CD4-positive, alpha-beta T cell (primary cell): ENCODE measurements at regions of chr6 and their contacts with region 1.

Region 1: GRCh38 chr6:14129575-14129974 is 12.0 kb downstream of the CD83 start:
- DNase-seq: peak in 8 of 14 experiments; percentile 14 to 63 (median 30)
- ATAC-seq: peak; percentile 67
- H3K4me3 ChIP-seq: no peak overlapping the region
- H3K4me3 Mint-ChIP-seq: no peak overlapping the region
- H3K27ac ChIP-seq: no peak overlapping the region
- H3K27ac Mint-ChIP-seq: no peak overlapping the region
- H3K4me1 ChIP-seq: peaks cover 11% of the 10 kb centered on the region
- H3K4me1 Mint-ChIP-seq: peaks cover 7% of the 10 kb centered on the region
- H3K27me3 ChIP-seq: no peaks in the 10 kb centered on the region
- H3K27me3 Mint-ChIP-seq: no peaks in the 10 kb centered on the region
- CTCF ChIP-seq: peak; percentile 23

Region 2: DNA sequence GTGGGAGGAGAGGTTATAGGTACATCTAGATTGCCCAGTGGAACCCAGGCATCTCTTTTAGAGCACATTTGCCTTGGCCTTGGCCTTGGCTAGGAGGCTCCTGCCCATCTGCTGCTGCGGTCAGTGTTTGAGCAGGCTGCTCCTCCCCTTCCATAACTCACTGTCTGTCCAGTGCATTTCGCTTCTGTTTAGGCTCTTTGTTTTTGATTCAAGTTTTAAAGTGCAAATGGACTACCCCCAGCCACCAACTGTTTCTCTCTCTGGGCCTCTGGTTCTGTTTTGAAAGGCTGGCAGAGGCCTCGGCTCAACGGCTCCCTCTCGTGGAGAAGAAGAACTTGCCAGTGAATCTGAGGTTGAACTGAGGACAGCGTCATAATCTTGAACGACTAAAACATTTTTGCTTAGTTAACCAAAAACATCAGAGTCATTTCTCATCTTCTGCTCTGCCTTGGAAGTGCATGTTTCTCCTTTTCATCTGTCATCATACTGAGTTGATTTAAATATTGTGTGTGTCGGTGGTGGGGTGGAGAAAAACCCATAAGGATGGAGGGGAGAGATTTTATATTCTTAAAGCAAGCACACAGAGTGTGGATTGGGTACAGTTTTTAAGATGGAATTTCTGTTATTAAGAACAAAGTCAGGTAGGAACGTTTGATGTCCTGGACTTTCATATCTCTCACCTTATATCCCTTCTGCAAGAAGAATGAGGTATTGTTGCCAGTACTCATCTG is 1361.8 kb after region 1 on chr6:
- CTCF ChIA-PET with region 1: no interaction called
- POLR2A ChIA-PET with region 1: no interaction called
- intact Hi-C with region 1: loop called (anchors 2 kb)
- DNase-seq: peak; percentile 52 to 80 (median 62)
- ATAC-seq: peak; percentile 84
- H3K4me3 ChIP-seq: no peak overlapping the region
- H3K4me3 Mint-ChIP-seq: no peak overlapping the region
- H3K27ac ChIP-seq: no peak overlapping the region
- H3K27ac Mint-ChIP-seq: peak overlapping the region; percentile 28
- H3K4me1 ChIP-seq: peaks cover 7% of the 10 kb centered on the region
- H3K4me1 Mint-ChIP-seq: peaks cover 47% of the 10 kb centered on the region
- H3K27me3 ChIP-seq: no peaks in the 10 kb centered on the region
- H3K27me3 Mint-ChIP-seq: no peaks in the 10 kb centered on the region
- CTCF ChIP-seq: peak; percentile 85